Activated CD8-positive, alpha-beta T cell treated with anti-CD3 and anti-CD28 coated beads, Interleukin-2, amount 10 ng/mL, durations not matched to agents 7 days and 5 days (primary cell): ENCODE measurements at regions of chr1 and their contacts with region 1.

Region 1: DNA sequence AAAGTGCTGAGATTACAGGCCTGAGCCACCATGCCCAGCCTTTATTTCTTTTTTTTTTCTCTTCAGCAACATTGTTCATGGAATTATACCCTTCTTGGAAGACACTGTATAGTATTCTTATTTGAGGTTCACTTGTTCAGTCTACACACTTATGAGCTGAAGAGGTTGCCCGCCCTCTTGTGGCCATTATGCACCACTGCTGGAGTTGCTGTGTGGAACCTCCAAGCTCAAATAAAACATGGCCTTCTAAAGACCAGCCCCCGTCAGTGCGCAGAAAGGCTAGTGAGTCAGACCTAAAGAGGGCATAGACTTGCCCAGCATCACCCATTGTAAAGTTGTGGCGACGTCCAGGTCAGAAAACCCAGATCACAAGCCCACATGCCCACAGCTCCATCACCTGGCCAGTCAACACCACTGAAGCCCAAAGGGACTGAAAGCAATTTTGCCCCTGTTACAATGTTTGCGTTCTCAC is 20.4 kb downstream of the LURAP1 start:
- DNase-seq: peak; percentile 80
- ATAC-seq: peak; percentile 95
- H3K4me3 Mint-ChIP-seq: no peak overlapping the region
- H3K27ac Mint-ChIP-seq: no peak overlapping the region
- H3K4me1 Mint-ChIP-seq: peaks cover 1% of the 10 kb centered on the region
- H3K27me3 Mint-ChIP-seq: no peaks in the 10 kb centered on the region

Region 2: GRCh38 chr1:46065405-46065804 is 158.1 kb before region 1 on chr1:
- CTCF ChIA-PET with region 1: interaction called, 11 read pairs
- POLR2A ChIA-PET with region 1: no interaction called
- DNase-seq: peak; percentile 28
- ATAC-seq: peak; percentile 87
- H3K4me3 Mint-ChIP-seq: peak overlapping the region; percentile 40
- H3K27ac Mint-ChIP-seq: peak overlapping the region; percentile 61
- H3K4me1 Mint-ChIP-seq: peaks cover 25% of the 10 kb centered on the region
- H3K27me3 Mint-ChIP-seq: no peaks in the 10 kb centered on the region

Region 3: DNA sequence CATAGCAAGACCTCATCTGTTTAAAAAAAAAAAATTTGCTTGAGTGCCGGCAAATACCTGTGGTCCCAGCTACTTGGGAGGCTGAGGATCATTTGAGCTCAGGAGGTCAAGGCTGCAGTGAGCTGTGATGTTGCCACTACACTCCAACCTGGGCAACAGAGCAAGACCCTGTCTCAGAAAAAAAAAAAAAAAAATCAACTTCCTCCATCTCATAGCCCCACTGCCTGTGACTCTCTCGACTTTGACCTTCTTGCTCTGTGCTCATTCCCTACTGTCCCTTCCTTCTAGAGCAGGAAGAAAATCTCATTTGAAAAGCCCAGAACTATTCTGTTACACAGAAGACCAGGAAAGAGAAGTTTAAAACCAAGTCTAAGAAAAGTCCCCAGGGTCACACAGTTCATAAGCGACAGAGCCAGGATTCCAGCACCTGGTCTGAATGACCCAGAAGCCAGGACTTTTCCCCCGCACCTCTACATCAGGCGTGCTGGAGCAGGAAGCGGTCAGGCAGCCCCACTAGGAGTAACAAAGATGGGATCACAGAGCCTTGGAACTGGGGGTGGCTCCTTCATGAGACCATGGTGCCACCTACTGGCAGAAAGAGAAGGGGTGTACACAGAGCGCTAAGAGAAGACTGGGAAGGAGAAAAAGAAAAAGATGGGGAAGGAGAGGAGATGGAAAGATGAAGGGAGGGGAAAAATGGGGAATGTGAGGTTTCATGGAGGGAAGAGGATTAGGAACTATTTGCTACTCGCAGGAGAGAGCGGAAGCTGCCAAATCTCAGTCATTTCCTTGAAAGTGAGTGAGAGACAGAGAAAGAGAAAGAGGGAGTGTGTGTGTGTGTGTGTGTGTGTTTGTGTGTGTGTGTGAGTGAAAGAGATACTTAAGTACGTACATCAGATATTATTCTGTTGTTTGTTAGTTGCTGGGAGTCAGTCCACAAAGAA is 44.1 kb before region 1 on chr1:
- CTCF ChIA-PET with region 1: interaction called, 16 read pairs
- POLR2A ChIA-PET with region 1: no interaction called
- DNase-seq: peak; percentile 73
- ATAC-seq: peak; percentile 83
- H3K4me3 Mint-ChIP-seq: no peak overlapping the region
- H3K27ac Mint-ChIP-seq: no peak overlapping the region
- H3K4me1 Mint-ChIP-seq: peaks cover 10% of the 10 kb centered on the region
- H3K27me3 Mint-ChIP-seq: peaks cover 2% of the 10 kb centered on the region

Region 4: GRCh38 chr1:46203738-46204405 is 19.6 kb before region 1 on chr1:
- CTCF ChIA-PET with region 1: interaction called, 16 read pairs
- POLR2A ChIA-PET with region 1: no interaction called
- DNase-seq: no peak
- ATAC-seq: no peak
- H3K4me3 Mint-ChIP-seq: no peak overlapping the region
- H3K27ac Mint-ChIP-seq: no peak overlapping the region
- H3K4me1 Mint-ChIP-seq: peaks cover 13% of the 10 kb centered on the region
- H3K27me3 Mint-ChIP-seq: peaks cover 7% of the 10 kb centered on the region

Region 5: GRCh38 chr1:46247436-46248121 is 24.1 kb after region 1 on chr1 and contains the start of gene RAD54L:
- CTCF ChIA-PET with region 1: interaction called, 60 read pairs
- POLR2A ChIA-PET with region 1: no interaction called
- DNase-seq: peak; percentile 98
- ATAC-seq: peak; percentile 93
- H3K4me3 Mint-ChIP-seq: peak within 1 kb of the TSS; percentile 93
- H3K27ac Mint-ChIP-seq: peak within 1 kb of the TSS; percentile 98
- H3K4me1 Mint-ChIP-seq: peaks cover 45% of the 10 kb centered on the region
- H3K27me3 Mint-ChIP-seq: peaks cover 2% of the 10 kb centered on the region
- total RNA-seq, gene RAD54L: 59.3 to 63.9 TPM

Region 6: GRCh38 chr1:46315669-46316403 is 92.3 kb after region 1 on chr1:
- CTCF ChIA-PET with region 1: no interaction called
- POLR2A ChIA-PET with region 1: no interaction called
- DNase-seq: no peak
- ATAC-seq: no peak
- H3K4me3 Mint-ChIP-seq: no peak overlapping the region
- H3K27ac Mint-ChIP-seq: peak overlapping the region; percentile 0
- H3K4me1 Mint-ChIP-seq: no peaks in the 10 kb centered on the region
- H3K27me3 Mint-ChIP-seq: no peaks in the 10 kb centered on the region

Region 7: DNA sequence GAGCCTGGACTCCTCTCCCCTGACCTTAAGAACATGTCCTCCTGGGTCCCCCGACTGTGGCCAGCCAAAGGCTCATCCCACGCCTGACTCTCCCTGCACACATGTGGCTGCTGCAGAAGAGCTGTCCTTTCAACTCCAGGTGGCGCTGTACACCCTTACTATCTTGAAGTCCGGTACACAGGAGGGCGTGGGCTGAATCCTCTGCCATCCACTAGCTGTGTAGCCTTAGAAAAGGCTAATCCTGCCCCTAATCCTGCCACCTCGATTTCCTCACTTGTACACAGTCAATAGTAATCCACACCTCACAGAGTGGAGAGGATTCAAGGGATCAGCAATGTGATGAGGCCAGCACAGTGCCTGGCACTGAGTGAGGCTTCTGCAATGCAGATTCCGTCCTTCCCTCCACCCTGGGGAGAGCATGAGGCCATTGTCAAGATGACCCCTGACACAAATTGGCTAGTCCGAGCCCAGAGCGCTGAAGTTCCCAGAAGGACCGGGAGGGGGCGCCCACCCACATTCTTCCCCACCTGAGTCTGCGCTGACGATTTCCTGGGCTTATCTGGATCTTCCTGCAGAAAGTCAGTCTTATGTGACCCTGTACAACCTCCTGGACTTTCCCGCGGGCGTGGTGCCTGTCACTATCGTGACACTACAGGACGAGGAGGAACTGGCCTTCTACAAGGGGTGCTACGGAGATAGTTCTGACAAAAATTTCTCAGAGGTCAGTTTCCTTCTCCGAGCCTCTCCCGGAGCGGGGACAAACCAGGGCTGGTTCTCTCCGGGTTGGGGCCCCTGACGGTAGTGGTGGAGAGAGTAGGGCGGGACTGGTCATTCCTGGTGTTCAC is 219.0 kb after region 1 on chr1:
- CTCF ChIA-PET with region 1: no interaction called
- POLR2A ChIA-PET with region 1: no interaction called
- DNase-seq: peak; percentile 77
- ATAC-seq: peak; percentile 79
- H3K4me3 Mint-ChIP-seq: peak overlapping the region; percentile 77
- H3K27ac Mint-ChIP-seq: peak overlapping the region; percentile 17
- H3K4me1 Mint-ChIP-seq: peaks cover 10% of the 10 kb centered on the region
- H3K27me3 Mint-ChIP-seq: peaks cover 26% of the 10 kb centered on the region